ENCODE measurements at regions of chr2 and their contacts with region 1.

Region 1: GRCh38 chr2:45105050-45105582 is 95.9 kb upstream of the SIX2 start:
- DNase-seq: no peak
- H3K4me3 ChIP-seq: no peak overlapping the region
- H3K27ac ChIP-seq: no peak overlapping the region
- H3K4me1 ChIP-seq: peaks cover 43% of the 10 kb centered on the region
- H3K27me3 ChIP-seq: no peaks in the 10 kb centered on the region
- CTCF ChIP-seq: no peak

Region 2: DNA sequence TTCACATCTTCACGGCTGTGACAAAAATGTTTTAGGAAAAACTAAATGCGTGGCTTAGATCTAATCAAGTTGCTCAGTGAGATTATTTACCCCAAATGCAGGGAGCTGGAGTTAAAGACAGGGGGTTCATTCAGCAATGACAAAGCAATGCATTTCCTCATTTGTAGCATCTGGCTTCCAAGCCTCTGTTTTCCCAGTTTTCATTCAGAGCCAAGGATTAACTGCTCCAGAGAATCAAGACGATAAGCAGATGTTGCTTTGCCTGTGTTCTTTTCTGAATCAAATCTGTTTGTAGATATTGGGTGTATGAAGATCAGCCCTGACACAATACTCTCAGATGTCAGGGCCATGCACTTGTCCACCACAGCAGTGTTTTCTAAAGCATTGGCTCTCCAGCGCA is 51.5 kb after region 1 on chr2:
- CTCF ChIA-PET with region 1: no interaction called
- POLR2A ChIA-PET with region 1: no interaction called
- intact Hi-C with region 1: no loop called
- DNase-seq: no peak
- H3K4me3 ChIP-seq: no peak overlapping the region
- H3K27ac ChIP-seq: no peak overlapping the region
- H3K4me1 ChIP-seq: no peaks in the 10 kb centered on the region
- H3K27me3 ChIP-seq: no peaks in the 10 kb centered on the region
- CTCF ChIP-seq: no peak

Region 3: GRCh38 chr2:45259138-45259537 is 154.0 kb after region 1 on chr2:
- CTCF ChIA-PET with region 1: no interaction called
- POLR2A ChIA-PET with region 1: interaction called, 13 read pairs
- intact Hi-C with region 1: no loop called
- DNase-seq: no peak
- H3K4me3 ChIP-seq: no peak overlapping the region
- H3K27ac ChIP-seq: no peak overlapping the region
- H3K4me1 ChIP-seq: peaks cover 23% of the 10 kb centered on the region
- H3K27me3 ChIP-seq: no peaks in the 10 kb centered on the region
- CTCF ChIP-seq: no peak